ENCODE measurements at regions of chrX and their contacts with region 1.

Region 1: DNA sequence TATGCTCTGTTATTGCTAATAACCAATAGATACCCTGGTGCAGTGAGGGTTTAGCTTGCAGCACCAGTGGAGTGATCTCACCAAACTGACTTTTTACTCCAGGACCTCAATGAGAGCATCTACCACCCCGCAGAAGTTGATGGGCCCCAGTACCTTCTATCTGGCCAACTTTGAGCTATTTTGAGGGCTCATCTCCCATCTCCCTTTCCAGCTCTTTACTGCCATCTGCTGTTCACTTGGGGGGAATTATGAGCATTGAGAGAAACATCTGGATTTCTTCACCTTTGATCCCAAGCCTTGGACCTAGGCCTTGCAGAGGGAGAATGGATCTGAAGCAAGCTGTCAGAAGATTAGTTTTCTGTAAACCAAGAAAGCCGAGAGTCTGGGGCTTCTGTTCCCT is 143.6 kb downstream of the TMEM164 start:
- DNase-seq: no peak
- ATAC-seq: peak; percentile 94
- H3K4me3 ChIP-seq: no peak overlapping the region
- H3K27ac ChIP-seq: no peak overlapping the region
- H3K4me1 ChIP-seq: no peaks in the 10 kb centered on the region
- H3K27me3 ChIP-seq: no peaks in the 10 kb centered on the region
- CTCF ChIP-seq: peak; percentile 63 to 71 (median 69)
- EP300 ChIP-seq: no peak
- POLR2A ChIP-seq: no peak
- RAD21 ChIP-seq: peak; percentile 84

Region 2: DNA sequence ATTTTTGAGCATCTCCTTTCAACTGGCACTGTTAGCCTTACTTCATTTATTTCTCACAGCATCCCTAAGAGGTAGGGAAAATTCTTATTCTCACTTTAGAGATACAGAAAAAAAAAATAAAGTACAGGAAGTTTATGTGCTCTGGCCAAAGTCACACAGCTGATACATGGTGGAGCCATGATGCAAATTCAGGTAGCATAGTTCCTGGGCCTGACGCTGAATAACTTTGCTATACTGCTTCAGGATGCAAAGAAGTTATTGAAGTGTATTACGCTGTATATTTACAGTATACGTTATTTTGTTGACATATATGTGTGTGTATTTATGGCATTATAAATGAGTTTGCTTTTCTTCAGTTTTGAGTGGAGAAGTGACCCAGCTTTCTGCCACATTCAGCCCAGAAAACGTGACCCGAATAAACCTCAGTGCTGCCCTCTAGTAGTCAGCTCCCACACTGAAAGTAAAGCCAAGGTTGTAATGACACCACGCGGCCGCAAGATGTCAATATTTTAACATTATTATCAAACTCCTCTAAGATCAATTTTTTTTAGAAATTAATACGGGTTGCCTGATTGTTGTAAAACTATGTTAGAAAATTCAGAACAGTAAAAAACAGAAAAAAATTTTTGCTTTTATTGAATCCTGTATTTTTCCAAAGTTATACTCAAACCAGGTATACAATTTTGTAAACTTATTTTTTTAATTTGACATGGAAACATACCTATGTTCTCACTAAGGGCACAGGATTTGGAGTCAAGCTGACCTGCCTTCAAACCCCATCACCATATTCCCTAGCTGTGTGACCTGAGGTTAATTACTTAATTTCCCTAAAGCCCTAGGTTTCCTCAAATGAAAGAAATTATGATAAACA is 660.8 kb before region 1 on chrX:
- CTCF ChIA-PET with region 1: interaction called, 12 read pairs
- POLR2A ChIA-PET with region 1: no interaction called
- RAD21 ChIA-PET with region 1: interaction called, 4 read pairs
- SMC1A ChIA-PET with region 1: interaction called, 5 read pairs
- in situ Hi-C with region 1: no loop called
- intact Hi-C with region 1: no loop called
- DNase-seq: peak; percentile 34
- ATAC-seq: peak; percentile 84
- H3K4me3 ChIP-seq: no peak overlapping the region
- H3K27ac ChIP-seq: no peak overlapping the region
- H3K4me1 ChIP-seq: no peaks in the 10 kb centered on the region
- H3K27me3 ChIP-seq: no peaks in the 10 kb centered on the region
- CTCF ChIP-seq: peak; percentile 93 to 99 (median 99); a peak in 5 of 6 replicates
- EP300 ChIP-seq: no peak
- POLR2A ChIP-seq: no peak
- RAD21 ChIP-seq: peak; percentile 91

Region 3: DNA sequence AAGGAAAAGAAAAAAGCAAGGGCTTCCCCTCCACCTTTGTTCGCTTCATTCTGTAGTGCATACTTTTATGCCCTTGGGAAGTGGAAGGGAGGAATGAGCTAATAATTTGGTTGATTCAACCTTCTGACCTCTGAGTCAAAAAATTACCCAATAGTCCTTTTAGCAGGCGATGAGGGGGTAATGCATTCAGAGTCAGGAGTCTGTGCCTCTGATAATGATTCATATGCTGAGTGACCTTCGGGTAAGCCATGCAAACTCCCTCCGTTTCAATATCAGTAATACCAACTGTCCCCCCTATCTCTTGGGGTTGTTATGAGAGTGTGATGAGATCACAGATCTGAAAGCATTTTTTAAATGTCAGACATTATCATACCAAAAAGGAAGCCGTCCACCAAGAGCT is 371.8 kb before region 1 on chrX:
- CTCF ChIA-PET with region 1: no interaction called
- POLR2A ChIA-PET with region 1: no interaction called
- RAD21 ChIA-PET with region 1: no interaction called
- SMC1A ChIA-PET with region 1: no interaction called
- in situ Hi-C with region 1: no loop called
- intact Hi-C with region 1: no loop called
- DNase-seq: peak; percentile 50
- ATAC-seq: peak; percentile 97
- H3K4me3 ChIP-seq: no peak overlapping the region
- H3K27ac ChIP-seq: 0 out of 2 replicates have a peak overlapping the region, but pooled peaks have one; percentile 12
- H3K4me1 ChIP-seq: peaks cover 6% of the 10 kb centered on the region; the same call in 1 of the 2 replicates
- H3K27me3 ChIP-seq: no peaks in the 10 kb centered on the region
- CTCF ChIP-seq: no peak
- EP300 ChIP-seq: peak; percentile 64 to 85; a peak in 2 of 4 replicates
- POLR2A ChIP-seq: no peak
- RAD21 ChIP-seq: no peak

Region 4: GRCh38 chrX:109911046-109911445 is 235.5 kb before region 1 on chrX:
- CTCF ChIA-PET with region 1: interaction called, 17 read pairs
- POLR2A ChIA-PET with region 1: no interaction called
- RAD21 ChIA-PET with region 1: interaction called, 5 read pairs
- SMC1A ChIA-PET with region 1: interaction called, 23 read pairs
- in situ Hi-C with region 1: no loop called
- intact Hi-C with region 1: loop called (anchors 1 kb)
- DNase-seq: no peak
- ATAC-seq: no peak
- H3K4me3 ChIP-seq: no peak overlapping the region
- H3K27ac ChIP-seq: no peak overlapping the region
- H3K4me1 ChIP-seq: no peaks in the 10 kb centered on the region
- H3K27me3 ChIP-seq: no peaks in the 10 kb centered on the region
- CTCF ChIP-seq: peak; percentile 26 to 39 (median 37); a peak in 5 of 6 replicates
- EP300 ChIP-seq: no peak
- POLR2A ChIP-seq: no peak
- RAD21 ChIP-seq: peak; percentile 30; the same call in 1 of the 2 replicates

Region 5: GRCh38 chrX:110002300-110003166 is 144.0 kb before region 1 on chrX and contains the start of gene TMEM164:
- CTCF ChIA-PET with region 1: interaction called, 20 read pairs
- POLR2A ChIA-PET with region 1: no interaction called
- RAD21 ChIA-PET with region 1: interaction called, 5 read pairs
- SMC1A ChIA-PET with region 1: interaction called, 3 read pairs
- in situ Hi-C with region 1: no loop called
- intact Hi-C with region 1: loop called (anchors 10 kb)
- DNase-seq: peak; percentile 52
- ATAC-seq: peak; percentile 89
- H3K4me3 ChIP-seq: peak within 1 kb of the TSS; percentile 68
- H3K27ac ChIP-seq: peak within 1 kb of the TSS; percentile 45
- H3K4me1 ChIP-seq: peaks cover 8% of the 10 kb centered on the region
- H3K27me3 ChIP-seq: no peaks in the 10 kb centered on the region
- CTCF ChIP-seq: no peak
- EP300 ChIP-seq: no peak
- POLR2A ChIP-seq: peak; percentile 71; the same call in 1 of the 2 replicates
- RAD21 ChIP-seq: no peak
- polyA plus RNA-seq, gene TMEM164: 0.61 to 1.2 TPM

Region 6: DNA sequence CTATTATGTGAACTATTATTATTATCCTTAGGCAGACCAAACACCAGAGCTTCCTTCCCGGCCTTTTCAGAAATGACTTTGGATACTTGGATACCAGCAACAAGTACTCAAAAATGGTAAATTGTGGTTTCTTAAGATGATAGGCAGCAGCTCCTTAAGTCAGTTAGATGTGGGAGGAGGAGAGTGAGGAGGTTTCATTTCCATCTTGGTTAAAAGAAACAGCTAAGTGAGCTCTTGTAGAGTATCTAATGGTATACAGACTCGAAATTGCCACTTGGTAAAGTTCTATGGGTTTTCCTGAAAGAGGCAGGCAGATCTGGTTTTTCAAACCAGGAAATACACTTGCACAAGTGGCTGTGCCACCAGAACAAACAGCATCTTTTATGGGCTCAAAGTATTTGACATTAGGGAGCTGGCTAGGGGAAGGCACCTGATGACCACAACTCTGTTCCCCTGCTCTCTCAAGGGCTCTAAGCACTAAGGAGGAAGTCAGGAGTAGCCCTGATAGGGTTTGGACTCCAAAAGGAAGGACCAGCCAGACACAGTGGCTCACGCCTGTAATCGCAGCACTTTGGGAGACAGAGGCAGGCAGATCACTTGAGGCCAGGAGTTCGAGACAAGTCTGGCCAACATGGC is 12.7 kb before region 1 on chrX:
- CTCF ChIA-PET with region 1: interaction called, 53 read pairs
- POLR2A ChIA-PET with region 1: interaction called, 6 read pairs
- RAD21 ChIA-PET with region 1: interaction called, 7 read pairs
- SMC1A ChIA-PET with region 1: interaction called, 3 read pairs
- in situ Hi-C with region 1: no loop called
- intact Hi-C with region 1: no loop called
- DNase-seq: no peak
- ATAC-seq: 0 out of 3 replicates have a peak, but pooled peaks have one; percentile 24
- H3K4me3 ChIP-seq: no peak overlapping the region
- H3K27ac ChIP-seq: no peak overlapping the region
- H3K4me1 ChIP-seq: no peaks in the 10 kb centered on the region
- H3K27me3 ChIP-seq: no peaks in the 10 kb centered on the region
- CTCF ChIP-seq: no peak
- EP300 ChIP-seq: no peak
- POLR2A ChIP-seq: no peak
- RAD21 ChIP-seq: no peak

Region 7: DNA sequence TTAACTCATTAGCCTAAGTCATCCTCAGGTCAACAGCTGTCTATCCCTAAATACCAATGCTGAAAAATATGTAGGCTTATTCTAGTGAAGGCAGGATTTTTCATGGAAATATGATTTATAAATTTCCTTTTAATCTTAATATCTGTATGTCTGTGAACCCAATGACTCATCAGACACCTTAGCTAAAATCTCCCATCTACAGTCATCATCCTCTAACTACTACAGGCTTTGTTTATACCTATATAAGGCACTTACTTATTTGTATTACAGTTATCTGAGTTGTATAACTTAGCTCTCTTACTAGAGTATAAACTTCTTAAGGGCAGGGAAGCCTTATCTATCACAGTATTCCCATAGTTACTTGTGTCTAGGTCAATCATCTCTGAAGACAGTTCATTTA is 147.1 kb after region 1 on chrX:
- CTCF ChIA-PET with region 1: no interaction called
- POLR2A ChIA-PET with region 1: no interaction called
- RAD21 ChIA-PET with region 1: no interaction called
- SMC1A ChIA-PET with region 1: no interaction called
- in situ Hi-C with region 1: no loop called
- intact Hi-C with region 1: no loop called
- DNase-seq: no peak
- ATAC-seq: no peak
- H3K4me3 ChIP-seq: no peak overlapping the region
- H3K27ac ChIP-seq: no peak overlapping the region
- H3K4me1 ChIP-seq: no peaks in the 10 kb centered on the region
- H3K27me3 ChIP-seq: no peaks in the 10 kb centered on the region
- CTCF ChIP-seq: no peak
- EP300 ChIP-seq: no peak
- POLR2A ChIP-seq: no peak
- RAD21 ChIP-seq: no peak

Region 8: DNA sequence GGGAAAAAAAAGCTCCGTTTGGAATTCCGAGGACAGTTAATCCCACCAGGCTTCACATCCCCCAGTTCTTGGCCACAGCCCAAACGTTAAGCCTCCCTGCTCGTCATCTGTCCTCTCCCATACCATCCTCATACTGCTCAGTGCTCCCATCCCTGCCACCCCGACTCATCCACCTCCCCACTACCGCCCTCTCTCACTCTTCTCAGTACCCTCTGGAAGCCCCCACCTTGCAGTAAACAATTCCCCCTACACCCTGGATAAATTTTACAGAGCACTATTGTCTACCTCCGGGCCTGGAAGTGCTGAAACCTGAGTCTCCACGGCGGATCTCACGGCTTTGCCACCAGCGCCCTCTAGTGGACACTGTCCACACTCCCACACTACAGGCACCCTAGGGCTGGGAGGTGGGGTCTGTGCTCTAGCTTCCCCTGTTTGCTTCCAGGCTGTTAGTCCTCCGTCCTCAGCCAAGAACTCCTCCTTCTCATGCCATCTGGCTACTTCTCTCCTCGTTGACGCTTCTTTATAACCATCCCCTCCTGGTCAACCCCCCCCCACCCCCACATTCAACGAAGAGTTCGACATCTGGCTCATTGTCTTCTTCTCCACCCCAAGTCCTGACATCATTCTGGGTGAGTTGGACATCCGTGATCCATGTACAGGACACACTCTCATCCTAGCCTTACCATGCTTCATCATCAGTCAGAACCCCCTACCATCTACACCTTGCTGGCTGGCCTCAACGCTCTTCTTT is 266.6 kb after region 1 on chrX:
- CTCF ChIA-PET with region 1: interaction called, 792 read pairs
- POLR2A ChIA-PET with region 1: no interaction called
- RAD21 ChIA-PET with region 1: interaction called, 8 read pairs
- SMC1A ChIA-PET with region 1: interaction called, 289 read pairs
- in situ Hi-C with region 1: no loop called
- intact Hi-C with region 1: no loop called
- DNase-seq: no peak
- ATAC-seq: peak; percentile 92
- H3K4me3 ChIP-seq: no peak overlapping the region
- H3K27ac ChIP-seq: no peak overlapping the region
- H3K4me1 ChIP-seq: peaks cover 5% of the 10 kb centered on the region
- H3K27me3 ChIP-seq: no peaks in the 10 kb centered on the region
- CTCF ChIP-seq: peak; percentile 85 to 89 (median 88)
- EP300 ChIP-seq: no peak
- POLR2A ChIP-seq: no peak
- RAD21 ChIP-seq: peak; percentile 74

Region 9: DNA sequence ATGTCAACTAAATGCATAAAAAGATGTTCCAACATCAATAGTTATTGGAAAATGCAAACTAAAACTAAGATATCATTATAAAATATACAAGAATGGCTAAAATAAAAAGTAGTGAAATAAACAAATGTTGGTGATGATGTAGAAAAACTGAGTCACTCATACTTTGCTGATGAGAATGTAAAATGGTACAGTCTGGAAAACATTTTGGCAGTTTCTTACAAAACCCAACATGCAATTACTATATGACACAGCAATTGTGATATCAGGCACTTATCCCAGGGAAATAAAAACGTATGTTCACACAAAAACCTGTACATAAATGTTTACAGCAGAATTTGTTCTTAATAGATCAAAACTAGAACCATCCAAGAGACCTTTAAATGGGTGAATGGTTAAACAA is 394.7 kb after region 1 on chrX:
- CTCF ChIA-PET with region 1: no interaction called
- POLR2A ChIA-PET with region 1: no interaction called
- RAD21 ChIA-PET with region 1: no interaction called
- SMC1A ChIA-PET with region 1: no interaction called
- in situ Hi-C with region 1: no loop called
- intact Hi-C with region 1: no loop called
- DNase-seq: no peak
- ATAC-seq: no peak
- H3K4me3 ChIP-seq: no peak overlapping the region
- H3K27ac ChIP-seq: no peak overlapping the region
- H3K4me1 ChIP-seq: no peaks in the 10 kb centered on the region
- H3K27me3 ChIP-seq: no peaks in the 10 kb centered on the region
- CTCF ChIP-seq: no peak
- EP300 ChIP-seq: no peak
- POLR2A ChIP-seq: no peak
- RAD21 ChIP-seq: no peak

Region 10: GRCh38 chrX:110847334-110847733 is 700.8 kb after region 1 on chrX:
- CTCF ChIA-PET with region 1: interaction called, 11 read pairs
- POLR2A ChIA-PET with region 1: no interaction called
- RAD21 ChIA-PET with region 1: no interaction called
- SMC1A ChIA-PET with region 1: interaction called, 6 read pairs
- in situ Hi-C with region 1: no loop called
- intact Hi-C with region 1: no loop called
- DNase-seq: peak; percentile 23
- ATAC-seq: peak; percentile 89
- H3K4me3 ChIP-seq: no peak overlapping the region
- H3K27ac ChIP-seq: no peak overlapping the region
- H3K4me1 ChIP-seq: no peaks in the 10 kb centered on the region
- H3K27me3 ChIP-seq: no peaks in the 10 kb centered on the region
- CTCF ChIP-seq: peak; percentile 46 to 66 (median 55); a peak in 5 of 6 replicates
- EP300 ChIP-seq: no peak
- POLR2A ChIP-seq: no peak
- RAD21 ChIP-seq: peak; percentile 71